PC-9 (cell line): ENCODE measurements at regions of chr18 and their contacts with region 1.

Region 1: GRCh38 chr18:48868468-48869466 is 82.0 kb downstream of the SMAD7 start:
- DNase-seq: no peak
- H3K4me3 ChIP-seq: no peak overlapping the region
- H3K27ac ChIP-seq: no peak overlapping the region
- H3K4me1 ChIP-seq: peaks cover 18% of the 10 kb centered on the region
- H3K27me3 ChIP-seq: no peaks in the 10 kb centered on the region
- CTCF ChIP-seq: no peak

Region 2: GRCh38 chr18:48308027-48308635 is 560.6 kb before region 1 on chr18:
- CTCF ChIA-PET with region 1: no interaction called
- POLR2A ChIA-PET with region 1: no interaction called
- intact Hi-C with region 1: no loop called
- DNase-seq: peak; percentile 59 to 90
- H3K4me3 ChIP-seq: no peak overlapping the region
- H3K27ac ChIP-seq: no peak overlapping the region
- H3K4me1 ChIP-seq: peaks cover 33% of the 10 kb centered on the region
- H3K27me3 ChIP-seq: no peaks in the 10 kb centered on the region
- CTCF ChIP-seq: no peak

Region 3: GRCh38 chr18:48921305-48922225 is 52.8 kb after region 1 on chr18:
- CTCF ChIA-PET with region 1: no interaction called
- POLR2A ChIA-PET with region 1: interaction called, 12 read pairs
- intact Hi-C with region 1: no loop called
- DNase-seq: no peak
- H3K4me3 ChIP-seq: no peak overlapping the region
- H3K27ac ChIP-seq: no peak overlapping the region
- H3K4me1 ChIP-seq: no peaks in the 10 kb centered on the region
- H3K27me3 ChIP-seq: no peaks in the 10 kb centered on the region
- CTCF ChIP-seq: no peak

Region 4: GRCh38 chr18:48997985-48998831 is 129.4 kb after region 1 on chr18:
- CTCF ChIA-PET with region 1: no interaction called
- POLR2A ChIA-PET with region 1: no interaction called
- intact Hi-C with region 1: no loop called
- DNase-seq: peak; percentile 91 to 98
- H3K4me3 ChIP-seq: peak overlapping the region; percentile 32; the same call in 1 of the 2 replicates
- H3K27ac ChIP-seq: peak overlapping the region; percentile 97
- H3K4me1 ChIP-seq: peaks cover 60% of the 10 kb centered on the region
- H3K27me3 ChIP-seq: no peaks in the 10 kb centered on the region
- CTCF ChIP-seq: no peak